Aorta (tissue), 5 donors: ENCODE measurements at regions of chr12 and their contacts with region 1.

Region 1: DNA sequence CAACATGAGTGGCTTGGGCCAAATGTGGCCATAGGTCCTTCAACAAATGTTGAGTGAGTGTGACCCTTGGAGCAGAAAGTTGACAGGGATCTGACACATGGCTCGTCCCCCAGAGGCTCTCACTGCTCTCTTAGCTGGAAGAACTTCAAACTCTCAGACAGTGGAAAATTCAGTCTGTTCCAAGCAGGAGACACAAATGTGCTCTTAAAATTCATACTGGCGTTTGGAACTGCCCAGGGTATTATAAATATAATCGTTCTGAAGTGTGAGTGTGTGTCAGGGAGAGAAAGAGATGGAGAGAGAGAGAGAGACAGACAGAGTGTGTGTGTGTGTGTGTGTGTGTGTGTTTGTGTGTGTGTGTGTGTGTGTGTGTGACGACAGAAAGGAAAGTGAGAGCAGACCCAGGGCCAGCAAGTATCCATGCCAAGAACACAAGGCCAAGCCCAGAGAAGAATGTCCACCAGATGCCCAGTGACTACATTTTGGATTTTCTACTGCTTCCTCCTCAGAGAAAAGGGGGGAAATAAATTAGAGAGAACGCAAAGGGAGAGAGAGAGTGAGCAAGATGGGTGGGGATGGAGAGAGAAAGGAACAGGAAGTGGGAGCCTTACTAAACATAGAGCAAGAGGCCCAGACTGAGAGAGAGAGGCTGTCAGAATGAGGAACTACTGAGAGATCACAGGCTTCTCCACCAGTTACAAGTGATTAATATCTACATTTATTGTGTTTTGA is 193.6 kb upstream of the NUDT4 start:
- DNase-seq: peak in 1 of 2 donors; percentile 59
- ATAC-seq: peak; percentile 89
- H3K4me3 ChIP-seq: no peak overlapping the region
- H3K27ac ChIP-seq: peak overlapping the region; percentile 73 to 93
- H3K4me1 ChIP-seq: peaks cover 2 to 11% of the 10 kb centered on the region in 2 donors
- H3K27me3 ChIP-seq: no peaks in the 10 kb centered on the region

Region 2: GRCh38 chr12:93127582-93128331 is 56.3 kb before region 1 on chr12:
- intact Hi-C with region 1: loop called in 1 of 2 experiments (anchors 5 kb)
- DNase-seq: peak; percentile 63 to 78
- ATAC-seq: peak; percentile 84
- H3K4me3 ChIP-seq: no peak overlapping the region
- H3K27ac ChIP-seq: peak overlapping the region in 1 of 2 donors; percentile 69
- H3K4me1 ChIP-seq: peaks cover 4 to 18% of the 10 kb centered on the region in 2 donors
- H3K27me3 ChIP-seq: no peaks in the 10 kb centered on the region

Region 3: GRCh38 chr12:93378373-93379325 is 194.5 kb after region 1 on chr12:
- intact Hi-C with region 1: loop called in 1 of 2 experiments (anchors 10 kb)
- DNase-seq: peak in 1 of 2 donors; percentile 63
- ATAC-seq: peak; percentile 31
- H3K4me3 ChIP-seq: peak overlapping the region; percentile 100
- H3K27ac ChIP-seq: peak overlapping the region; percentile 91 to 100
- H3K4me1 ChIP-seq: peaks cover 0 to 4% of the 10 kb centered on the region in 2 donors
- H3K27me3 ChIP-seq: no peaks in the 10 kb centered on the region